ENCODE measurements at regions of chr20 and their contacts with region 1.

Region 1: GRCh38 chr20:15613530-15613929 is 959.7 kb downstream of the KIF16B start:
- DNase-seq: peak; percentile 49 to 53
- H3K4me3 ChIP-seq: no peak overlapping the region
- H3K4me3 Mint-ChIP-seq: no peak overlapping the region
- H3K27ac Mint-ChIP-seq: peak overlapping the region; percentile 30
- H3K4me1 ChIP-seq: peaks cover 25% of the 10 kb centered on the region
- H3K4me1 Mint-ChIP-seq: peaks cover 41% of the 10 kb centered on the region
- H3K27me3 ChIP-seq: no peaks in the 10 kb centered on the region
- H3K27me3 Mint-ChIP-seq: no peaks in the 10 kb centered on the region
- CTCF ChIP-seq: no peak

Region 2: DNA sequence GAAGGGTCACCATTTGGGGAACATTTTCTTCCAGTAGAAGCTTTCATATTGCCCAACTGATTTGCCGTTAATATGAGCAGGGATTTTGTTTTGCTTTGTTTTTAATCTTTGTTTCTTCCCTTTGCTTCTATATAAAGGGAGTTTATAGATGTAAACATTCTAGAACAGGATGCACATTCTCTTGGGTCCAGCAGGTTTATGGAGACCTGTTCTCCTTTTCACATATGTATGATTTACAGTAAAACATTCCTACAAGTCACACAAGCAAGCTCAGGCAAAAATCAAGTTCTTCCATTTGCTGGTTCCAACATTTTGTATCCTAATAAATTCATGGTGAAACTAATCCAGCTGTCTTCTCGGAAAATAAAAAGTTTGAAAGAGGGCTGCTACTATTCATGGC is 193.7 kb before region 1 on chr20:
- CTCF ChIA-PET with region 1: no interaction called
- POLR2A ChIA-PET with region 1: no interaction called
- intact Hi-C with region 1: no loop called
- DNase-seq: no peak
- H3K4me3 ChIP-seq: no peak overlapping the region
- H3K4me3 Mint-ChIP-seq: no peak overlapping the region
- H3K27ac Mint-ChIP-seq: no peak overlapping the region
- H3K4me1 ChIP-seq: no peaks in the 10 kb centered on the region
- H3K4me1 Mint-ChIP-seq: no peaks in the 10 kb centered on the region
- H3K27me3 ChIP-seq: no peaks in the 10 kb centered on the region
- H3K27me3 Mint-ChIP-seq: no peaks in the 10 kb centered on the region
- CTCF ChIP-seq: no peak

Region 3: DNA sequence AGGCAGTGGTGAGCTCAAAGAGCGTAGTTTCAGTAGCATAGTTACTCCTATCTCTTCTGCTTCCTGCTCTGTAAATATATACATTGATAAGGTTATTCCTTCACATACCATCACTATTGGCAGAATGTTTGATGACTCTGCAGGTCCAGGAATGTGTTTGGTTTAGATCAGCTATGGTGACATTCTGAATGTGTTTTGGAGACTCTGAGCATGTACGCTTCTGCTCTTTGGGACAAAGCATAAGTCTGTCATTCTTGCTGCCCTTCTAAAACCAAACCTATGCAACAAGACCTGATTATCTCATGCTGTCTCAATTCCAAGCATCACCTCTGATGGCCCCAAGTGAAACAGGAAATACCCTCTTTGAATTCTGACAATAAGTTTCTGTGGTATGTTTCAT is 114.6 kb before region 1 on chr20:
- CTCF ChIA-PET with region 1: no interaction called
- POLR2A ChIA-PET with region 1: no interaction called
- intact Hi-C with region 1: loop called (anchors 1 kb)
- DNase-seq: peak; percentile 76 to 81
- H3K4me3 ChIP-seq: no peak overlapping the region
- H3K4me3 Mint-ChIP-seq: peak overlapping the region; percentile 51
- H3K27ac Mint-ChIP-seq: peak overlapping the region; percentile 58
- H3K4me1 ChIP-seq: peaks cover 59% of the 10 kb centered on the region
- H3K4me1 Mint-ChIP-seq: peaks cover 55% of the 10 kb centered on the region
- H3K27me3 ChIP-seq: no peaks in the 10 kb centered on the region
- H3K27me3 Mint-ChIP-seq: no peaks in the 10 kb centered on the region
- CTCF ChIP-seq: no peak

Measured in Caco-2 (cell line).